HCT116 (cell line): ENCODE measurements at regions of chr15 and their contacts with region 1.

Region 1: GRCh38 chr15:31215490-31216214 is 111.0 kb upstream of the KLF13 start:
- DNase-seq: no peak
- ATAC-seq: peak; percentile 89
- H3K4me3 ChIP-seq: peak overlapping the region; percentile 51 to 63
- H3K27ac ChIP-seq: peak overlapping the region; percentile 92
- H3K4me1 ChIP-seq: peaks cover 9 to 19% of the 10 kb centered on the region in 2 experiments; a peak in 3 of 4 replicates
- H3K27me3 ChIP-seq: no peaks in the 10 kb centered on the region
- CTCF ChIP-seq: peak; percentile 62 to 82 (median 76)
- POLR2A ChIP-seq: no peak
- RAD21 ChIP-seq: peak; percentile 63

Region 2: GRCh38 chr15:31101262-31102038 is 114.2 kb before region 1 on chr15 and contains the start of gene TRPM1:
- CTCF ChIA-PET with region 1: no interaction called
- POLR2A ChIA-PET with region 1: no interaction called
- RAD21 ChIA-PET with region 1: no interaction called
- intact Hi-C with region 1: no loop called
- DNase-seq: no peak
- ATAC-seq: no peak
- H3K4me3 ChIP-seq: no peak within 1 kb of the TSS
- H3K27ac ChIP-seq: no peak within 1 kb of the TSS
- H3K4me1 ChIP-seq: peaks cover 3 to 6% of the 10 kb centered on the region in 2 experiments; a peak in 2 of 4 replicates
- H3K27me3 ChIP-seq: no peaks in the 10 kb centered on the region
- CTCF ChIP-seq: no peak
- POLR2A ChIP-seq: no peak
- RAD21 ChIP-seq: no peak
- total RNA-seq, gene TRPM1: not detected

Region 3: GRCh38 chr15:31125061-31125460 is 90.6 kb before region 1 on chr15:
- CTCF ChIA-PET with region 1: no interaction called
- POLR2A ChIA-PET with region 1: no interaction called
- RAD21 ChIA-PET with region 1: no interaction called
- intact Hi-C with region 1: no loop called
- DNase-seq: no peak
- ATAC-seq: no peak
- H3K4me3 ChIP-seq: no peak overlapping the region
- H3K27ac ChIP-seq: no peak overlapping the region
- H3K4me1 ChIP-seq: peaks cover 0 to 4% of the 10 kb centered on the region in 2 experiments; a peak in 1 of 4 replicates
- H3K27me3 ChIP-seq: no peaks in the 10 kb centered on the region
- CTCF ChIP-seq: no peak
- POLR2A ChIP-seq: no peak
- RAD21 ChIP-seq: no peak

Region 4: GRCh38 chr15:31435261-31435911 is 219.7 kb after region 1 on chr15:
- CTCF ChIA-PET with region 1: interaction called, 11 read pairs
- POLR2A ChIA-PET with region 1: interaction called, 3 read pairs
- RAD21 ChIA-PET with region 1: interaction called in 1 of 2 experiments, 8 read pairs
- intact Hi-C with region 1: loop called (anchors 10 kb)
- DNase-seq: peak; percentile 59
- ATAC-seq: peak; percentile 91
- H3K4me3 ChIP-seq: no peak overlapping the region
- H3K27ac ChIP-seq: no peak overlapping the region
- H3K4me1 ChIP-seq: peaks cover 5 to 13% of the 10 kb centered on the region in 2 experiments
- H3K27me3 ChIP-seq: no peaks in the 10 kb centered on the region
- CTCF ChIP-seq: peak; percentile 75 to 98 (median 93)
- POLR2A ChIP-seq: no peak
- RAD21 ChIP-seq: peak; percentile 87